ENCODE measurements at regions of chr13 and their contacts with region 1.

Region 1: DNA sequence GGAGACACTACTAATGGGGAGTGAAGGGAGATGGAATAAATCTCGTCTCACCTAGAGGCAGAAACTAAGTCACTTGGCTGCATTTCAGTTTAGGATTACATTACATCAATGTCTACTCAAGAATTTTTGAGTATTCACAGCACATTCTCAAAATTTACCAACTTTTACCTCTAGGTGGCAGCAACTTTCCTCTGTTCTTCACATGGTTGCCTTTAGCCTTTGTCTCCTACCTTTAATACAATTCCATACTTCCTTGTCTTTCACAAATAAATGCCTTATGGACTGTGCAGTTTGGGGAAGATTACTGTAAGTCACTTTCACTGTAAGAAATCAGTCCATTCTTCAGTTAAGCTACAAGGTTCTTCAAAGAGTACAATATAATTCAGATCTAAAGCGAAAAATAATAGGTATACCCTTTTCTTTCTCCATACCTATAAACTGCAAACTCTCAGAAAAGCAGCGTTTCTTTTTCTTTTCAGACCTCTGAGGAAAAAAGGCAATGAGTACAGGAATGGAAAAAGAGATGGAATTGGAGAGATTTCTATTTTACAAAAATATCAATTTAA is 379.4 kb downstream of the KLF12 start:
- DNase-seq: no peak
- ATAC-seq: peak; percentile 64
- H3K4me3 ChIP-seq: no peak overlapping the region
- H3K27ac ChIP-seq: no peak overlapping the region
- H3K4me1 ChIP-seq: no peaks in the 10 kb centered on the region
- H3K27me3 ChIP-seq: no peaks in the 10 kb centered on the region

Region 2: GRCh38 chr13:73792796-73793195 is 38.0 kb after region 1 on chr13:
- intact Hi-C with region 1: no loop called
- DNase-seq: no peak
- ATAC-seq: no peak
- H3K4me3 ChIP-seq: no peak overlapping the region
- H3K27ac ChIP-seq: no peak overlapping the region
- H3K4me1 ChIP-seq: no peaks in the 10 kb centered on the region
- H3K27me3 ChIP-seq: no peaks in the 10 kb centered on the region

Region 3: DNA sequence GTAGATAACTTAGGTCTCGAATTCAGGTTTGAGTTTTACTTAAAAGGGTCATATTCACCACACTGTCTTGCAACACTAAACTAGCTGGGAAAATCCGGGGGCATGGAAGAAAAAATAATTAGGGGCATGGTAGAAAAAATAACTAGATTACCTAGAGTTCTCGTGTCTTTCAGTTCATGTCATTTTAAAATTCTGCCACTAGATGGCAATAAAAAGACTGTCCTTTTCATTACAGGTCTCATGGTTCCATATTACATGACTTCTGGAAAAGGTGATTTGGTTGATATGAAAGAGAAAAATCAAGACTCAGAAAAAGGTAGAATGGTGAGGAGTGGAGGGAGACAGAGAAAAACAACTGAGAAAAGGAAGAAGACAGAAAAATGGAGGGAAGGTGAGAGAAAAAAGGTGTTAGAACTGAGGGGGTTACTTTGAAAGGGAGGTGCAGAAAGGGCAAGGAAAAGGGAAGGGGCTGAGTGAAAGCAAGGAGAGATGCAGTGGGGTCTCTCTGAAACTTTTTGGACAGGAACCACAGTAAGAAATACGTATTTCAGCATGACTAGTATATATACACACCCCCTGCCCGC is 80.4 kb after region 1 on chr13:
- intact Hi-C with region 1: loop called in 1 of 2 experiments (anchors 10 kb)
- DNase-seq: no peak
- ATAC-seq: peak; percentile 62
- H3K4me3 ChIP-seq: no peak overlapping the region
- H3K27ac ChIP-seq: no peak overlapping the region
- H3K4me1 ChIP-seq: peaks cover 0 to 3% of the 10 kb centered on the region in 2 donors
- H3K27me3 ChIP-seq: no peaks in the 10 kb centered on the region

Region 4: GRCh38 chr13:74287724-74288169 is 532.9 kb after region 1 on chr13:
- intact Hi-C with region 1: loop called (anchors 5 to 10 kb)
- DNase-seq: peak; percentile 90 to 94
- ATAC-seq: peak; percentile 76
- H3K4me3 ChIP-seq: peak overlapping the region in 1 of 2 donors; percentile 38
- H3K27ac ChIP-seq: no peak overlapping the region
- H3K4me1 ChIP-seq: peaks cover 0 to 3% of the 10 kb centered on the region in 2 donors
- H3K27me3 ChIP-seq: no peaks in the 10 kb centered on the region

Region 5: GRCh38 chr13:74575729-74576125 is 820.9 kb after region 1 on chr13:
- intact Hi-C with region 1: loop called in 1 of 2 experiments (anchors 10 kb)
- DNase-seq: peak; percentile 77 to 92
- ATAC-seq: peak; percentile 88
- H3K4me3 ChIP-seq: peak overlapping the region; percentile 11 to 54
- H3K27ac ChIP-seq: no peak overlapping the region
- H3K4me1 ChIP-seq: no peaks in the 10 kb centered on the region
- H3K27me3 ChIP-seq: no peaks in the 10 kb centered on the region

Region 6: GRCh38 chr13:75219479-75220237 is 1464.8 kb after region 1 on chr13:
- intact Hi-C with region 1: loop called in 1 of 2 experiments (anchors 10 kb)
- DNase-seq: peak; percentile 84 to 95
- ATAC-seq: peak; percentile 90
- H3K4me3 ChIP-seq: no peak overlapping the region
- H3K27ac ChIP-seq: no peak overlapping the region
- H3K4me1 ChIP-seq: no peaks in the 10 kb centered on the region
- H3K27me3 ChIP-seq: no peaks in the 10 kb centered on the region

Measured in aorta (tissue), 5 donors.